ENCODE measurements at regions of chr19 and their contacts with region 1.

Region 1: DNA sequence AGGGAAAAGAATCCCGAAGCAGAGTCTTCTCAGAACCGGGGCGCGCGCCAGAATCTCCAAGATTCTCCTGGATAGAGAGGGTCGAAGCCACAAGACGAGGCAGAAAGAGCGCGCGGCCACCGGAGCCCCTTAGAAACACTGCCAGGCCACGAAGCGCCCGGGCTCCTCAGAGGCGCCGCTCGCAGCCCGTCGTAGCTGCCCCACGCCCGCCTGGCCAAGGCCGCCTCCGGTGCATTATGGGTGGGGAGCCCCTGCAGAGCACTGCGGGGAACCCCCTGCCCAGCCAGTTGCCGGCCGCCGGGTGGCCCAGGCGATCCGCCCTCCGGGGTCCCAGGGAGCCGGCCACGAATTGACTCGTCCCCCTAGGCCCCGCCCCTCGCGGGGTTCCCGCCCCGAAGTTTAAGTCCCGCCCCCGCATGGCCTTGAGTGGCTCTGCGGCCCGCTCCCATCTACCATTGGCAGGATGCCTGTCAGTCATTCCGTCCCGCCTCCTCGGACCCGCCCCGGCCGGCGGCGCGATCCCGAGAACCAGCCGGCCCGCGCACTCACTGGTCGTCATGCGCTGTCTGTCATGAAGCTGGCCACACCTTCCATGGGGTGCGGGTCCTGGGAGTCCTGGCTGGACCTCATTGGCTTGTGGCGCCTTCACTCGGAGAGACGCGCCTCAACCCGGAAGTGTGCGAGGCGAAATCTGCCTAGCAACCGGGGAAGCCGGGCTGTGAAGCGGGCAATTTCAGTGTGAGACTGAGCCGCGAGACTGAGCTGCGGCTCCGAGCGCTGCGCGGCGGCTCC is 20.2 kb upstream of the GATAD2A start:
- DNase-seq: peak; percentile 99 to 100
- H3K4me3 ChIP-seq: peak overlapping the region; percentile 88
- H3K4me3 Mint-ChIP-seq: peak overlapping the region; percentile 94
- H3K27ac Mint-ChIP-seq: peak overlapping the region; percentile 99
- H3K4me1 ChIP-seq: peaks cover 6% of the 10 kb centered on the region; the same call in 1 of the 2 replicates
- H3K4me1 Mint-ChIP-seq: peaks cover 6% of the 10 kb centered on the region
- H3K27me3 ChIP-seq: no peaks in the 10 kb centered on the region
- H3K27me3 Mint-ChIP-seq: no peaks in the 10 kb centered on the region
- CTCF ChIP-seq: peak in 1 of 2 experiments; percentile 23

Region 2: GRCh38 chr19:19320362-19321142 is 64.8 kb before region 1 on chr19 and contains the starts of genes MAU2 and SUGP1:
- CTCF ChIA-PET with region 1: no interaction called
- POLR2A ChIA-PET with region 1: no interaction called
- intact Hi-C with region 1: loop called (anchors 1 kb)
- DNase-seq: peak; percentile 91 to 92
- H3K4me3 ChIP-seq: peak within 1 kb of the TSS; percentile 100
- H3K4me3 Mint-ChIP-seq: peak within 1 kb of the TSS; percentile 77
- H3K27ac Mint-ChIP-seq: peak within 1 kb of the TSS; percentile 91
- H3K4me1 ChIP-seq: no peaks in the 10 kb centered on the region; the same call in 1 of the 2 replicates
- H3K4me1 Mint-ChIP-seq: peaks cover under 1% of the 10 kb centered on the region
- H3K27me3 ChIP-seq: no peaks in the 10 kb centered on the region
- H3K27me3 Mint-ChIP-seq: no peaks in the 10 kb centered on the region
- CTCF ChIP-seq: no peak
- total RNA-seq, gene MAU2: 51.3 and 62.6 TPM in 2 replicates
- total RNA-seq, gene SUGP1: 51.2 and 58.4 TPM in 2 replicates

Region 3: GRCh38 chr19:19361075-19361594 is 24.2 kb before region 1 on chr19:
- CTCF ChIA-PET with region 1: interaction called, 6 read pairs
- POLR2A ChIA-PET with region 1: interaction called, 4 read pairs
- intact Hi-C with region 1: loop called (anchors 1 kb)
- DNase-seq: peak; percentile 77 to 82
- H3K4me3 ChIP-seq: no peak overlapping the region
- H3K4me3 Mint-ChIP-seq: no peak overlapping the region
- H3K27ac Mint-ChIP-seq: no peak overlapping the region
- H3K4me1 ChIP-seq: no peaks in the 10 kb centered on the region
- H3K4me1 Mint-ChIP-seq: peaks cover 7% of the 10 kb centered on the region
- H3K27me3 ChIP-seq: no peaks in the 10 kb centered on the region; the same call in 1 of the 2 replicates
- H3K27me3 Mint-ChIP-seq: no peaks in the 10 kb centered on the region
- CTCF ChIP-seq: peak; percentile 69 to 73

Region 4: GRCh38 chr19:19366612-19367396 is 18.5 kb before region 1 on chr19:
- CTCF ChIA-PET with region 1: interaction called, 6 read pairs
- POLR2A ChIA-PET with region 1: interaction called, 4 read pairs
- intact Hi-C with region 1: loop called (anchors 2 kb)
- DNase-seq: peak; percentile 90 to 93
- H3K4me3 ChIP-seq: no peak overlapping the region
- H3K4me3 Mint-ChIP-seq: no peak overlapping the region
- H3K27ac Mint-ChIP-seq: peak overlapping the region; percentile 55
- H3K4me1 ChIP-seq: peaks cover 7% of the 10 kb centered on the region
- H3K4me1 Mint-ChIP-seq: peaks cover 7% of the 10 kb centered on the region
- H3K27me3 ChIP-seq: no peaks in the 10 kb centered on the region; the same call in 1 of the 2 replicates
- H3K27me3 Mint-ChIP-seq: no peaks in the 10 kb centered on the region
- CTCF ChIP-seq: peak; percentile 80 to 94

Region 5: GRCh38 chr19:19540715-19541440 is 155.6 kb after region 1 on chr19:
- CTCF ChIA-PET with region 1: no interaction called
- POLR2A ChIA-PET with region 1: no interaction called
- intact Hi-C with region 1: no loop called
- DNase-seq: peak; percentile 48 to 70
- H3K4me3 ChIP-seq: no peak overlapping the region
- H3K4me3 Mint-ChIP-seq: no peak overlapping the region
- H3K27ac Mint-ChIP-seq: no peak overlapping the region
- H3K4me1 ChIP-seq: no peaks in the 10 kb centered on the region
- H3K4me1 Mint-ChIP-seq: peaks cover 6% of the 10 kb centered on the region
- H3K27me3 ChIP-seq: no peaks in the 10 kb centered on the region
- H3K27me3 Mint-ChIP-seq: no peaks in the 10 kb centered on the region
- CTCF ChIP-seq: no peak

Measured in Caco-2 (cell line).